ENCODE measurements at regions of chr18 and their contacts with region 1.

Region 1: GRCh38 chr18:48022531-48023329 is 92.3 kb upstream of the SMAD2 start:
- DNase-seq: no peak
- H3K4me3 Mint-ChIP-seq: no peak overlapping the region
- H3K27ac Mint-ChIP-seq: no peak overlapping the region
- H3K4me1 Mint-ChIP-seq: no peaks in the 10 kb centered on the region
- H3K27me3 Mint-ChIP-seq: peaks cover 45% of the 10 kb centered on the region

Region 2: DNA sequence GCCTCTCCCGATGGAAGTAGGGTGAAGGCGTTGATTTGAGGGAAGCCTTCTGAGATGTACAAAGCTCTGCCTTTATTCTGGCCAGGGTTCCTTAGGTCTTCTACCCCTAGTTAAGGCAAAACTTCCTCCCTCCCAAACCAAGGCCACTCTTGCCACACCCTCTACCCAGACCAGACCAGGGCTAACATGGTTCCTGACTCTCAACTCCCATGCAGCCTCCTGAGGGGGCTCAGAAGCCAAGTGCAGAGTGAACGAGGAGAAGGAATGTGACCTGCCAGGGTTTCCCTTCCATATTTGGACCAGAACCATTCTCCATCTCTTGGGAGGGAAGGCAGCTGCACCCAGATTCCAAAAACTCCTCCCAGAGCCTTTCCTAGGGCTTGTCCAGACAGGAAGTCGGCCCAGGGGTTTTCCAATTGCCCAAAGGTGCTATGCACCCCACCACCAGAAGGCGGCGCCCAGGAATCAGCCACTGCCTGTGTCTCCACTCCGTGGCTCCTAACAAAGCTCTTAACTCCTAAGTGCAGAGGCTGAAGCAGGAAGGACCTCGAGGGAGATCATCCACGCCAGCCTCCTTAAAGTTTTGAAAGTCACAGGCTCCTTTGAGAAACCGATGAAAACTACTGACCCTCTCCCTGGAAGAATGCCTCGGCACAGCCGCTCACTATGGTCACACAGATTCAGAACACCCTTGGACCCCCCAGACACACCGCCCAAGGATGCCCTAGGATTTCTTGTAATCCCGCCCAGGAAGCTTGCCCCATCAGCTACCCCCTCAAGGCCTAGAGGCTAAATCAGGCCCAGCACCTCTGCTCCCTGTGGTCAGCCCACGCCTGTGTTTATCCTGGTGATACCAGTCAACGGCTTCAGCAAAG is 250.1 kb before region 1 on chr18:
- CTCF ChIA-PET with region 1: interaction called, 12 read pairs
- DNase-seq: peak; percentile 63
- H3K4me3 Mint-ChIP-seq: no peak overlapping the region
- H3K27ac Mint-ChIP-seq: no peak overlapping the region
- H3K4me1 Mint-ChIP-seq: no peaks in the 10 kb centered on the region
- H3K27me3 Mint-ChIP-seq: peaks cover 30% of the 10 kb centered on the region